ENCODE measurements at regions of chrX and their contacts with region 1.

Region 1: DNA sequence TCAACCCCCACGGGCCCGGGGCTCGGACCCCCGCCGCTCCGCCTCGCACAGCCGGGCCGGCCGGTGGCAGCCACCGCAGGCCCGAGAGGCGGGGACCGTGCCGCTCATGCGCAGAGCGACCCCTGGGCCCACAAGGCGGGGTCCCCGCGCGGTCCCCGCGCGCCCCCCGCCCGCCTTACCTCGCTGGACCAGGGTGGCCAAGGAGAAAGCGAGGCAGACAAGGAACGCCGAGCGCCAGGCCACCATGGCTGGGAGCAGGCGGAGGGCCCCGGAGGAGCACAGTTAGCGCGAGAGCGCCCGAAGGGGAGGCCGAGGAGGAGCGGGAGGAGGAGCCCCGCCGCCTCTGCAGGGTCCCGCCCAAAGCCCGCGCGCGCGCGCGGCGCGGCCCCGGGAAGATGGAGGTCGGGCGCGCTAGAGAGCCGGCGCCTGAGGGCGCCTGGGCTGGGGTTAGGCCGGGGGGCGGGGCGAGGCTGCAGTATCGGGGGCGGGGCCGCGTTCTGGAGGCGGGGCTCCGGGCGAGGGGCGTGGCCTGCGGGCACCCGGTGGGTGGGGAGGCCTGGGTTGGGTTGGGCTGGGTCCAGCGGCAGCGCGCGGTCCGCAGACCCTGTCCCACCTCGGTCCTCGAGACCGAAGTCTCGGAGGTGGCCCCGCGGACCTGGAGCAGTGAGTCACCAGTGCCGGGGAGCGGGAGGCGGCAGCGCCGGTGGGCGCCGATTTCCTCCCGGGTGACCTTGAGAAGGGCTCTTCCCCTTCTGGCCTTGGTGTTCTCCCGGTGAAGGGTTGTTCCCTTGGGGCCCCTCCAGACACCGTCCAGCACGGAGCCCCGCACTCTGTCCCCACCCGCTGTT is at the start of gene CD99L2:
- DNase-seq: peak; percentile 82
- H3K4me3 ChIP-seq: peak within 1 kb of the TSS; percentile 66 to 70 (median 70)
- H3K27ac ChIP-seq: peak within 1 kb of the TSS; percentile 72
- H3K4me1 ChIP-seq: peaks cover 7% of the 10 kb centered on the region
- H3K27me3 ChIP-seq: no peaks in the 10 kb centered on the region
- CTCF ChIP-seq: no peak
- total RNA-seq, gene CD99L2: 14.9 to 26.3 TPM

Region 2: GRCh38 chrX:150779385-150779784 is 119.2 kb before region 1 on chrX:
- CTCF ChIA-PET with region 1: no interaction called
- dilution Hi-C with region 1: no loop called
- in situ Hi-C with region 1: no loop called
- intact Hi-C with region 1: no loop called
- DNase-seq: no peak
- H3K4me3 ChIP-seq: no peak overlapping the region
- H3K27ac ChIP-seq: no peak overlapping the region
- H3K4me1 ChIP-seq: no peaks in the 10 kb centered on the region
- H3K27me3 ChIP-seq: no peaks in the 10 kb centered on the region
- CTCF ChIP-seq: no peak

Region 3: GRCh38 chrX:150826981-150827380 is 71.6 kb before region 1 on chrX:
- CTCF ChIA-PET with region 1: no interaction called
- dilution Hi-C with region 1: loop called (anchors 10 kb)
- in situ Hi-C with region 1: no loop called
- intact Hi-C with region 1: no loop called
- DNase-seq: no peak
- H3K4me3 ChIP-seq: no peak overlapping the region
- H3K27ac ChIP-seq: no peak overlapping the region
- H3K4me1 ChIP-seq: no peaks in the 10 kb centered on the region
- H3K27me3 ChIP-seq: no peaks in the 10 kb centered on the region
- CTCF ChIP-seq: no peak

Region 4: DNA sequence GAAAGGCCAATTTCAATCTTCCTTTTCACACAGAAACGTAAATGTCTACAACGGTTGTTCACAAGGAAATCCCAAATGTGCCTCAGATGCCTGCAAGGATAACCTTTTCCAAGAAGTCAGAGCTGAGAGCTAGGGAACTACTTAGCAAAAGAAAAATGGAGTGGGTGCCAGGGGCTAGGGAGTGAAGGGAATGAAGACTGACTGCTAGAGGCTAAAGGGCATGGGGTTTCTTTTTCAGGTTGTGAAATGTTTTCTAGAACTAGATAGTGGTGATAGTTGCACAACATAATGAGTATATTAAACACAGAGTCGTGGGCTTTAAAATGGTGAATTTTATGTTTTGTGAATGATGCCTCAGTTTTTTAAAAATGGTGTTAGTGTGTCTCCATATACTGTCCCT is 53.5 kb before region 1 on chrX:
- CTCF ChIA-PET with region 1: no interaction called
- dilution Hi-C with region 1: no loop called
- in situ Hi-C with region 1: no loop called
- intact Hi-C with region 1: loop called (anchors 1 kb)
- DNase-seq: no peak
- H3K4me3 ChIP-seq: no peak overlapping the region
- H3K27ac ChIP-seq: peak overlapping the region; percentile 72
- H3K4me1 ChIP-seq: peaks cover 54% of the 10 kb centered on the region
- H3K27me3 ChIP-seq: no peaks in the 10 kb centered on the region
- CTCF ChIP-seq: no peak

Region 5: GRCh38 chrX:150989420-150989819 is 90.9 kb after region 1 on chrX:
- CTCF ChIA-PET with region 1: no interaction called
- dilution Hi-C with region 1: no loop called
- in situ Hi-C with region 1: no loop called
- intact Hi-C with region 1: no loop called
- DNase-seq: no peak
- H3K4me3 ChIP-seq: no peak overlapping the region
- H3K27ac ChIP-seq: no peak overlapping the region
- H3K4me1 ChIP-seq: peaks cover 6% of the 10 kb centered on the region
- H3K27me3 ChIP-seq: no peaks in the 10 kb centered on the region
- CTCF ChIP-seq: no peak